ENCODE measurements at regions of chr22 and their contacts with region 1.

Region 1: DNA sequence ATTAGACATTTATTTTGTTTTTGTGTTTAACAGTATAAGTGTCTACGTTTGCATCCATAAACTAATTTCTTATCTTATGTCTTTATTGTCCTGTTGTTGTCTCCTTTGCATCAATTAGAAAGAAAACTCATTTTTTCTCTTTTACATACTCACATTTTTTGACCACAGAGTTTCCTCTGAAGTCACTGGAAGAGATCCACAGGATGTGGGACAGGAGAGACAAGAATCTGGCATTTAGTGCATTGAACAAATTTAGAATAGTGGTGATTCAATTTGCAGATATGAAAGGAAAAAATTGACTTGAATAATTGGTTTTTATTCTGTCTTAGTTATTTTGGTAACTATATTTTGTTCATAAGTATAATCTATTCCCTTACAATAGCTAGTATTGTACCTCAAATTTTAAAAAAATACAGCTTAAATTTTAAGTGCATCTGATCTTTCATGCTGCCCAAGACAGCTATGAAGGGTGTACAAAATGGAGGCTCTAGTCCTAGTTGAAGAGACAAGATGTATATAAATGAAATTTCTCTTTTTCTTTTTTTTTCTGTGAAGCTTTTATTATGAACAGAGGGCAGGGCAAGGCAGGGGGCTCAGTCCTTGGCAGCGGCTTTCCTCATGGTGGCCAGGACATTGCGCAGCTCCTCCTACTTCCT is 24.4 kb downstream of the HORMAD2 start:
- DNase-seq: no peak

Region 2: DNA sequence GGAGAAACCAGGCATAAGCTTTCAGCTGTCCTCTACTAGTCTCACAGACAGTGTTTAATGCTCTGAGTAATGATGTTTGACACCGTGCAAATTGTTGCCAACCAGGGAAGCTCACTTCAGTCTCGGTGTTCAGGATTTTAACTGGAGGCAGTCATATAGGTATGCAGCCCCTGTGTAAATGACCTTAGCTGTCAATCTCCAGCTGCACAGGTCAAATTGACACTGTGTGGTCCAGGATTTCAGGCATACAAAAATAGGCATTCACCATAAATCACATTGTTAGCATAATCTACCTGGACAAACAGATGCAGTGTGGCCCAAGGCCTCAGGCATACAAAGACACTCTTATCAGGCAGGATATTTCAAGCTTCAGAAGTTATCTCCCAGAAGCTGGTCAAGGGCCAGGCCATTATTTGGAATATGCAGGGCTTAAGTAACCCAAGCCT is 50.0 kb before region 1 on chr22:
- intact Hi-C with region 1: no loop called
- DNase-seq: no peak

Region 3: DNA sequence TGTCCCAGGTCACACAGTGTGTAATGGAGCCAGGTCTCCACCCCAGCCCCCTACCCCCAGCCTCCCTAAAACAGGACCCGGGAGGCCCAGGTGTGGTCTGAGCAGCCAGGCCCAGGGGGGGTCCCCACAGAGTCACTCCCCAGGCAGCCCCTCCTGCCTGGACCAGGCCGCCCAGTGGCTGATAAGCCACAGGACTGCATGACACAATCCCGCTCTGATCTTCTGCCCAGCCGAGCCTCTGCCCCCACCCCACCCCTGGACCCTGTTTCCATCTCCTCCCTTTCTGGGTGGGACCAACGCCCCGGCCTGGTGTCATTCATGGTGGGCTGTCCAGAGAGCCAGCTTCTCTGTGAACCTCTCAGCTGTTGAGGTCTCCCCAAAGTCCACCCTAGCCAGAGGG is 149.7 kb after region 1 on chr22:
- intact Hi-C with region 1: loop called in 1 of 2 experiments (anchors 2 kb)
- DNase-seq: no peak

Region 4: DNA sequence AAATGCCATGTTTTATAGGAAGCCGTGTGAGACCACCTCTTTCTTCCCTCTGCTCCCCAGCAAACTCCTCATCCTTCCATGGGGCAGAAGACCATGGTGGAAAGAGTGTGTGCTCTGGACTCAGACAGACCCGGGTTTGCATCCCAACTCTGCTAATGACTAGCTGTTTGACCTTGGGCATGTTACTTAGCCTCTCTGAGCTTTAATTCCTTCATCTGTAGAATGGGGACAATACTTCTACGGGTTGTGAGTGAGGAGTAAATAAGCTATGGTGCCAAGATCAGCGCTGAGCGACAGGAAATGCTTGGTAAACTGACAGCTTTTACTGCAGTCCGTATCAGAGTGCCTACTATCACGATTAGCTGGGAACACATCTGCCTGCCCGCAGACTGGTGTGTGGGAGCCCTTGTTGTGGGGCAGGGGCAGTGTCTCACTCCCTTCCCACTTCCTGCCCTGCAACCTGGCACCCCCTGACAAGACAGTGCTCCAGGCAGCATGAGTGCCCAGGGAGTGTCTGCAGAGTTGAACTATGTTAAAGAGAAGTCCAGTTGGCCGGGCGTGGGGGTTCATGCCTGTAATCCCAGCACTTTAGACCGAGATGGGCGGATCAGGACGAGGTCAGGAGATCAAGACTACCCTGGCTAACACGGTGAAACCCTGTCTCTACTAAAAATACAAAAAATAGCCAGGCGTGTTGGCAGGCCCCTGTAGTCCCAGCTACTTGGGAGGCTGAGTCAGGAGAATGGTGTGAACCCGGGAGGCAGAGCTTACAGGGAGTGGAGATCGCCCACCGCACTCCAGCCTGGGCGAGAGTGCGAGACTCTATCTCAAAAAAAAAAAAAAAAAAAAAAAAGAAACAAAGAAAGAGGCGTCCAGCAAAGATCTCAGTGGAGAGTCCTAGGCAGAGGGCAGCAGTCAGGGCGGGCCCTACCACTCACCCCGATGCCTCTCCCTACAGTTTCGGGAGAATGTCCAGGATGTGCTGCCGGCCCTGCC is 294.4 kb after region 1 on chr22:
- intact Hi-C with region 1: no loop called
- DNase-seq: no peak